Lower leg skin (tissue), 4 donors: ENCODE measurements at regions of chr5 and their contacts with region 1.

Region 1: GRCh38 chr5:180367991-180368390 is 14.9 kb upstream of the GFPT2 start:
- DNase-seq: no peak
- H3K4me3 ChIP-seq: no peak overlapping the region
- CTCF ChIP-seq: no peak
- POLR2A ChIP-seq: no peak

Region 2: GRCh38 chr5:180315762-180316212 is 52.2 kb before region 1 on chr5:
- intact Hi-C with region 1: no loop called
- DNase-seq: peak in 1 of 2 donors; percentile 91
- H3K4me3 ChIP-seq: no peak overlapping the region
- CTCF ChIP-seq: peak in 1 of 3 donors; percentile 64
- POLR2A ChIP-seq: no peak

Region 3: GRCh38 chr5:180339583-180340183 is 28.3 kb before region 1 on chr5:
- intact Hi-C with region 1: loop called (anchors 2 kb)
- DNase-seq: no peak
- H3K4me3 ChIP-seq: no peak overlapping the region
- CTCF ChIP-seq: no peak
- POLR2A ChIP-seq: no peak

Region 4: DNA sequence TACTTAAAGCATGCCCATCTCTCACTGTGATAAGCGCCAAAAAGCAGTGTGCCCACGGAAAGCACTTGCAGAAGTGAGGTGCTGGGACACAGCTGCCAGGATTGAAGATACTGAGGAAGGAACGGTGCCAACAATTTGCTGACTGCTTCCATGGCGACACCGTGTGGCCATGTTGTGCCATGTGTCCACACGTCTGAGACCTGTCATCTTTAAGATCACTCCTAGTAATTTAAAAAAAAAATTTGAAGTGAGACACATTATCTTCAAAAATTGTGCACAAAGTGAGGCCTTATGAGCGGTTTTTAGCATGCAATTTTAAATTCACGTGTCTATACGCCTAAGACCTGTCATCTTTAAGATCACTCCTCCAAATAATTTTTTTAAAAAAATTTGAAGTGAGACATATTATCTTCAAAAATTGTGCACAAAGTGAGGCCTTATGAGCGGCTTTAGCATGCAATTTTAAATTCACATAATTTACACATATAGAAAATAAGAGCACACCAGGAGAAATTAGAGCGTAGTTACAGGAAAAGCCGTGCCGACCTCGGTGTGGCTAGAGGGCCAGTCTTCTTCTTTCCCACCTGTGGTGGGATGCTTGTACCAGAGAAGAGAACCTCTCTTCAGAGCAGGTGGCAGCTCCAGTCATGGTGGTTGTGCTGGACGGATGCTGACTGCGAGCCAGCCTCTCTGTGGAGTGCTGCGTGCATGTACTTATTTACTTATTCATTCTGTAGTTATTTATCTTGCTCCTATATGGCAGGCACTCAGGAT is 302.8 kb after region 1 on chr5:
- intact Hi-C with region 1: no loop called
- DNase-seq: peak in 1 of 2 donors; percentile 18
- H3K4me3 ChIP-seq: no peak overlapping the region
- CTCF ChIP-seq: no peak
- POLR2A ChIP-seq: no peak